Activated T-helper 1 cell treated with anti-CD3 and anti-CD28 coated beads, Interleukin-12 subunit alpha, Interleukin-12 subunit beta, Interleukin-2, Interleukin-4 antibody, amounts not matched to agents 30 ng/mL and 10 ng/mL and 1 ng/mL, durations not matched to agents 14 hours and 24 hours and 36 hours (primary cell): ENCODE measurements at regions of chr11 and their contacts with region 1.

Region 1: DNA sequence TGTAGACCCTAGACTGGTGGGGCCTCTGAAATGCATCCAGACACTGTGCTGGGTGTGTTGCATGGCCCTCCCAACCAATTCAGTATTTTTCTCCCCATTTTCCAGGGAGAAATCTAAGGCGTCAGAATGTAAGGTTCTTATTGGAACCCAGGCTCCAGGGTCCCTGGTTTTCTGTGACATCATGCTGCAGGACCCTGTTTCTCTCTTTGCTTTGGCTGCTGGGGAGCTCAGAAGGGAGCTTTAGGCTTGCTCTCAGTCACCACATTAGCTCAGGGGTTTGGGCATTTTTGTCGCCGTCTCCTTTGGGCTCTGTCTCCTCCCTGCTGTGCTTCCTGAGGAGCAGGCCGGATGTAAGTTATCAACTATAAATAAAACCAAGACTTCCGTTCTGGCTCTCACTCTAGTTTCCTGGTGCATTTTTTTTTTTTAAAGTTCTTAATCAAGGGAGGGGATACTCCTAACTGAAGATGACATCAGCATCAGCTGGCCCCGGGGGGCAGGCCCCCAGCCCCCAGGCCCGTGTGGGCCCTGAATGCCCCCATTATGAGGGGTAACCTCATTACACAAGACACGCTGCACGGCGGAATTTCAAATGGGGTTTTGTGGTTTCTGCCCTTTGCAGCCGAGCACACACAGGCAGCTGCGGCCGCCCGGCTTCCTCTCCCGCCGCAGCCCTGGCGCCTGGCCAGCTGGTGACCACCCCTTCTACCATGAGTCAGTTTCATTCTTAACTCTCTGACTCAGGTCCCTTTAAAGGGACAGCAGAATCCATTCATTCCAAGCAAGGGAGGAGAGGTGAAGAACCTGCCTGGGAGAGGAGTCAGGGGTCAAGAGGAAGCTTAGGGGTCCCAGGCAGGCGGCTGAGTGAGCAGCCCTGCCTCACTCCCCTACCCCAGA is 3.2 kb downstream of the MYEOV start:
- DNase-seq: peak; percentile 77
- H3K4me3 Mint-ChIP-seq: peak overlapping the region; percentile 82
- H3K27ac Mint-ChIP-seq: peak overlapping the region; percentile 97
- H3K4me1 Mint-ChIP-seq: peaks cover 64% of the 10 kb centered on the region
- H3K27me3 Mint-ChIP-seq: peaks cover 6% of the 10 kb centered on the region

Region 2: DNA sequence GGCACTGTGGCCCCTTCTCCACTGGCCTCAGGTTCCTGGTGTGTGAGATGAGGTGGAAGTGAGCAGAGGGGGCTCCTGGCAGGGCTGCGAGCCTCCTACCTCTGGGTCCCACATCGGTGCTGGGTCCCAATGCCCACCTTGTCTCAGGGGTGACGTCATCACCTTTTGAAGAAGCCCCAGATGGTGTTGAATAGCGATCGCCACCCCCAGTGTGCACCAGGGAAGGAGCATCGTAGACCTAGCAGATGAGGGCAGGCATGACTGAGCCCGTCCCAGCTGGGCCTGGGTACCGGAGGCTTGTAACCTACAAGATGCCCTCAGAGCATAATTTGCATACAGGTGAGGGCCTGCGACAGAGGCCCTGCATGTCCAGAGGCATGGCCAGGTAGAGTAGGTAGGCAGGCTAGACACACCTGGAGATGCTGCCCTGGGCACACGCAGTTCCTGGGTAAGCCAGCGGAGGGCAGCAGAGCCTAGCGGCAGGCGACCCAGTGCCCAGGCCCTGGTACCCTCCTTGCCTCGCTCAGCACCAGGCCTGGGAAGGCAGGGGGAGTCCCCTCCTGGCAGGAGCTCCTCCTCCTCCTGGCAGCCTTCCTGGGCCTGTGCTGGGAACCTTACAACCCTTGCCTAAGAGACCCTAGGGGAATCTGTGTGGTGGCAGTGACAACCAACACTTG is 195.9 kb before region 1 on chr11:
- intact Hi-C with region 1: loop called (anchors 5 kb)
- DNase-seq: peak; percentile 53
- H3K4me3 Mint-ChIP-seq: no peak overlapping the region
- H3K27ac Mint-ChIP-seq: no peak overlapping the region
- H3K4me1 Mint-ChIP-seq: no peaks in the 10 kb centered on the region
- H3K27me3 Mint-ChIP-seq: no peaks in the 10 kb centered on the region

Region 3: DNA sequence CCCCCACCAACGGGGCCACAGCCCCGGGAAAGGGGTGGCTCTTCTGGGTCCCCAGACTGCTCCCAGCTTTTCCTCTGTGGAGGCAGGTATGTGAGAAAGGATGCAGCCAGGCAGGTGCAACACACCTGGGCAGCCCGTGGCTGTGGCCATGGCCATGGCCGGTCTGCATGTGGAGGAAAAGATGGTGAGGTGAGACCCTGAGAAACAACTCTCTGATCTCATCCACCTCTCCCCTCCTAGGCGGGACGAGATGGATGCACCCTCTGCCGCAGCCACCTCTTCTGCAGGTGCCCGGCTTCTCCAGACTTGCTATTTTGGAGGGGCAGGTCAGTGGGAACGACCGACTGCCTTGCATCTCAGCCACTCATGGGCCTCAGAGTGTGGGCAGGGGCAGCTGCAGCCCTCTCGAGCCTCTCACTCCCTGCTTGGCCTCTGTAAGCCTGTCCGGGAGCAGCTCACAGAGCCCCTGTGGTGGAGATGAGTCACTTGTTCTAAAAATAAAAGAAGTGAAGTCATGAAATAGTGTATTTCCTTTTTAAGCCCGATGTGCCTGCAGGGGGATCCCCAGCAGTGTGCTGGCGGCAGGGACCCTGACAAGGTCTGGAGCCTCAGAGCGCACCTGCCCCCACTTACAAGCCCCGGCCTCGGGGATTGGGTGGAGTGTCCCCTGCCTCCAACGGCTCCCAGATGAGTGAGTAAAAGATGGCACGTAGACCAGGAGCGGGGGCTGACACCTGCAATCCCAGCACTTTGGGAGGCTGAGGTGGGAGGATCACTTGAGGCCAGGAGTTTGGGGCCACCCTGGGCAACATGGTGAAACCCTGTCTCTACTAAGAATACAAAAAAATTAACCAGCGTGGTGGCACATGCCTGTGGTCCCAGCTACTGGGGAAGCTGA is 130.7 kb before region 1 on chr11:
- intact Hi-C with region 1: loop called (anchors 1 kb)
- DNase-seq: peak; percentile 17
- H3K4me3 Mint-ChIP-seq: peak overlapping the region; percentile 67
- H3K27ac Mint-ChIP-seq: peak overlapping the region; percentile 90
- H3K4me1 Mint-ChIP-seq: peaks cover 24% of the 10 kb centered on the region
- H3K27me3 Mint-ChIP-seq: peaks cover 2% of the 10 kb centered on the region

Region 4: GRCh38 chr11:69280994-69281393 is 16.1 kb before region 1 on chr11:
- intact Hi-C with region 1: no loop called
- DNase-seq: no peak
- H3K4me3 Mint-ChIP-seq: no peak overlapping the region
- H3K27ac Mint-ChIP-seq: no peak overlapping the region
- H3K4me1 Mint-ChIP-seq: no peaks in the 10 kb centered on the region
- H3K27me3 Mint-ChIP-seq: peaks cover 4% of the 10 kb centered on the region

Region 5: GRCh38 chr11:69317401-69318092 is 20.4 kb after region 1 on chr11:
- intact Hi-C with region 1: loop called (anchors 1 kb)
- DNase-seq: no peak
- H3K4me3 Mint-ChIP-seq: peak overlapping the region; percentile 9
- H3K27ac Mint-ChIP-seq: peak overlapping the region; percentile 92
- H3K4me1 Mint-ChIP-seq: peaks cover 30% of the 10 kb centered on the region
- H3K27me3 Mint-ChIP-seq: no peaks in the 10 kb centered on the region

Region 6: DNA sequence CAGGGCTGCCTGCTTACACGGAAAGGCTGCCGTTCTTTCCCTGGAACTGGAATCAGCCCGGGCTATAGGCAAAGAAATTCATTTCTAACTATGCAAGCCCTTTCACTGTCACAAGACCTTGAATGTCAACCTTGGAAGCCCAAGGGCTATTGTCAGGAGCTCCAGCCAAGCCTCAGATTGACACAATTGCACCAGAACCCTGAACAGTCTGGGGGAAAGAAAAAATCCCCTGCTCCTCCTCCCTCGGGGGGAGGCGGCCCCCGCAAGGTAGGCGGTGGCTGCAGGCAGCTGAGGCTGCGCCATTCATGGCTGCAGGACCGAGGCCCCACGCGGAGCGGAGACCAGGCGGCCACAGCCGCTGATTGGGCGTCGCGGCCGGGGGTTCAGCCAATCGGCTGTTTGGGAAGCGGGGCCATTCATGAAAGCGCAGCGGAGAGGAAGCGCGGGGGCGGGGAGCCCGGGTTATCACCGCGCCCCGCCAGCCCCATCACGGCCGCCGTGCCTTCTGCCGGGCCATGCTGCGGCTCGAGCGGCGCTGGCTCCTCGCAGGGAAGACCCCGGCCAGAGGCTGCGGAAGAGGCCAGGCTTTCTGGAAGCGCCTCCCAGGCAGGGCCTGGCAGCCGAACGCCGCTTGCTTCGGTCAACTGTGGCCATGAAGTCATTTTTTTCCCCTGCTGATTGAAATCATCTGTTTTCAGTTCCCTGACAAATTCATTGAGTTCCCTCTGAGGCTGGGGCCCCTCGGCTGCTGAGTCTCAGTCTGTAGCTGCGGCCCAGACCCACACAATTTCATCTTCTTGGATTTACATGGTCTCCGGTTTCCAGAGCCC is 146.2 kb after region 1 on chr11:
- intact Hi-C with region 1: loop called (anchors 1 kb)
- DNase-seq: peak; percentile 71
- H3K4me3 Mint-ChIP-seq: peak overlapping the region; percentile 63
- H3K27ac Mint-ChIP-seq: peak overlapping the region; percentile 52
- H3K4me1 Mint-ChIP-seq: peaks cover 7% of the 10 kb centered on the region
- H3K27me3 Mint-ChIP-seq: peaks cover 4% of the 10 kb centered on the region

Region 7: GRCh38 chr11:69642913-69643632 is 345.9 kb after region 1 on chr11:
- intact Hi-C with region 1: loop called (anchors 1 kb)
- DNase-seq: peak; percentile 62
- H3K4me3 Mint-ChIP-seq: peak overlapping the region; percentile 73
- H3K27ac Mint-ChIP-seq: no peak overlapping the region
- H3K4me1 Mint-ChIP-seq: no peaks in the 10 kb centered on the region
- H3K27me3 Mint-ChIP-seq: peaks cover 24% of the 10 kb centered on the region